B cell (primary cell): ENCODE measurements at regions of chr21 and their contacts with region 1.

Region 1: DNA sequence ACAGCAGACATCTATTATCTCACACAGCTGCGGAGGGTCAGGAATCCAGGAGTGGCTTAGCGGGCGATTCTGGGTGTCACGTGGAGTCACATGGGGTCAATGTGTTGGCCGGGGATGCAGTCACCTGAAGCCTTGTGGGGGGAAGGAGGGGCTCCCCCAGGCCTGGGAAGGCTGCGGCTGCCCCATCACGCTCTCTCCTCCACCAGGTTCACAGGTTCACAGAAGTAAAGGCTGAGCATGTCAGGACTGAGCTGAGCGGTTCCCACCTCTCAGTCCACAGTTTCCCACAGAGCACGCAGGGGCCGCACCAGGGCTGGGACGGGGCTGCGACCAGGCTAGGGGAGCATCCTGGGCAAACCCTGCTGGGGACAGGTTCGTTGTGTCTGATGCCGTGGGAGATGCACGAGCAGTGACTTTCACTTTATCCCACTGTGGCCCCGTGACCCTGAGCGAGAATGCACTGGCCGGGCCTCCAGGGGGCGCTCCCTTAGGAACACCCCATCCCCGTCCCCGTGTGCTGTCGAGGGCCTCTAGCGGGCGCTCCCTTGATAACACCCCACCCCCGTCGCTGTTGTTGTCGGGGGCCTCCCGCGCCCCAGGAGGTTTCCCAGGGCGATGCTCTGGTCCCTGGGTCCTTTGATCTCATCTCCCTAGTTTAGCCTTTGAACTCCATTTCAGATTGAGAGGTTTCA is 73.2 kb upstream of the TRAPPC10 start:
- DNase-seq: peak; percentile 91
- ATAC-seq: peak; percentile 96
- H3K4me3 ChIP-seq: peak overlapping the region in 4 of 5 experiments; percentile 56 to 71 (median 66)
- H3K4me3 Mint-ChIP-seq: peak overlapping the region; percentile 95
- H3K27ac ChIP-seq: peak overlapping the region in 1 of 2 donors; percentile 41
- H3K27ac Mint-ChIP-seq: peak overlapping the region; percentile 82
- H3K4me1 ChIP-seq: peaks cover 9 to 23% of the 10 kb centered on the region in 2 donors
- H3K4me1 Mint-ChIP-seq: peaks cover 20% of the 10 kb centered on the region
- H3K27me3 ChIP-seq: no peaks in the 10 kb centered on the region
- H3K27me3 Mint-ChIP-seq: no peaks in the 10 kb centered on the region
- CTCF ChIP-seq: peak; percentile 99

Region 2: GRCh38 chr21:43810505-43811261 is 128.2 kb before region 1 on chr21:
- CTCF ChIA-PET with region 1: interaction called, 8 read pairs
- POLR2A ChIA-PET with region 1: no interaction called
- intact Hi-C with region 1: loop called (anchors 1 kb)
- DNase-seq: peak; percentile 84
- ATAC-seq: peak; percentile 97
- H3K4me3 ChIP-seq: no peak overlapping the region
- H3K4me3 Mint-ChIP-seq: no peak overlapping the region
- H3K27ac ChIP-seq: no peak overlapping the region
- H3K27ac Mint-ChIP-seq: peak overlapping the region; percentile 56
- H3K4me1 ChIP-seq: peaks cover 21 to 33% of the 10 kb centered on the region in 2 donors
- H3K4me1 Mint-ChIP-seq: peaks cover 28% of the 10 kb centered on the region
- H3K27me3 ChIP-seq: peaks cover 0 to 25% (median 5%) of the 10 kb centered on the region in 4 experiments
- H3K27me3 Mint-ChIP-seq: peaks cover 7% of the 10 kb centered on the region
- CTCF ChIP-seq: peak; percentile 83

Region 3: DNA sequence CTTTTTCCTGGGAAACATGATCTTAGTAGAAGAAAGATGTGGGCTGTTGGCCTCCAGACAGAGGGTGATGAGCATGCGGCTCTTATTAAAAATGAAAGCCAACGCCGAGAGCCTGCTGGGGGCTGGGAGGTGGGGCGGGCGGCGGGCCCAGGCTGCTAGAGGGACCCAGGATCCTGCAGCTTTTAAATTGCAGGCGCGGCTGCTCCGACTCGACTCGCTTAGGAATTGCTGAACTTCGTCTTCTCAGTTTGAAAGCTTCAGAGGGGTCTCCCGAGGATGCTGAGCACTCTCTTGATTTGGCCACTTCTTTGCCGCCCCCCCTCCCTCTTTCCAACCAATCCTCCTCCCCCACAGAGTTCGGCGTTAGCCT is 72.7 kb before region 1 on chr21:
- CTCF ChIA-PET with region 1: interaction called, 4 read pairs
- POLR2A ChIA-PET with region 1: no interaction called
- intact Hi-C with region 1: loop called (anchors 2 kb)
- DNase-seq: peak; percentile 51
- ATAC-seq: peak; percentile 16
- H3K4me3 ChIP-seq: peak overlapping the region; percentile 32 to 78 (median 65)
- H3K4me3 Mint-ChIP-seq: peak overlapping the region; percentile 78
- H3K27ac ChIP-seq: peak overlapping the region; percentile 11 to 64
- H3K27ac Mint-ChIP-seq: peak overlapping the region; percentile 72
- H3K4me1 ChIP-seq: peaks cover 13 to 33% of the 10 kb centered on the region in 2 donors
- H3K4me1 Mint-ChIP-seq: peaks cover 41% of the 10 kb centered on the region
- H3K27me3 ChIP-seq: no peaks in the 10 kb centered on the region
- H3K27me3 Mint-ChIP-seq: no peaks in the 10 kb centered on the region
- CTCF ChIP-seq: no peak

Region 4: DNA sequence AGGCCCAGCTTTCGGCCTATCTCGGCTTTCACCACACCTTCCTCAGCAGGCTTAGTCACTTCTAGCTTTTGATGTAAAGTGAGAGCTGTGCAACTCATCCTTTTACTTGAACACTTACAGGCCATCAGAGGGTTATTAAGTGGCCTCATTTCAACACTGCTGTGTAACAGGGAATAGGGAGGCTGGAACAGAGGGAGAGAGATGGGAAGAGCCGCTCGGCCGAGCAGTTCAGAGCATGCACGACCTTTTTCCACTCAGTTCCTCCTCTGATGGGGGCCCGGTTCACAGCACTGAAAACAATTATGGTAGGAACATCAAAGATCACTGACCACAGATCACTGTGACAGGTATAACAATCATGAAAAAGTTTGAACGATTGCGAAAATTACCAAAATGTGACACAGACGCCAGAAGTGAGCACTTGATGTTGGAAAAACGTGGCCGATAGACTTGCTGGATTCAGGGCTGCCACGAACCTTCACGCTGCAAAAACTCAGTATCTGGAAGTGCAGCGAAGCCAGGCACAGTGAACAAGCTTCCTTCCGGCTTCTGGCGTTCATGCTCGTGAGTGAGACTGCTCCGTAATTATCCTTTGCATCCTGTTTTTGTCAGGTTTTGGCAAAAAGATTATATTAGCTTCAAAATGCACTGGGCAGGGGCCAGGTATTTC is 45.2 kb before region 1 on chr21:
- CTCF ChIA-PET with region 1: interaction called, 16 read pairs
- POLR2A ChIA-PET with region 1: interaction called, 6 read pairs
- intact Hi-C with region 1: no loop called
- DNase-seq: peak; percentile 23
- ATAC-seq: peak; percentile 41
- H3K4me3 ChIP-seq: peak overlapping the region; percentile 5 to 50 (median 23)
- H3K4me3 Mint-ChIP-seq: peak overlapping the region; percentile 78
- H3K27ac ChIP-seq: peak overlapping the region in 1 of 2 donors; percentile 17
- H3K27ac Mint-ChIP-seq: peak overlapping the region; percentile 3
- H3K4me1 ChIP-seq: peaks cover 6 to 16% of the 10 kb centered on the region in 2 donors
- H3K4me1 Mint-ChIP-seq: peaks cover 23% of the 10 kb centered on the region
- H3K27me3 ChIP-seq: no peaks in the 10 kb centered on the region
- H3K27me3 Mint-ChIP-seq: no peaks in the 10 kb centered on the region
- CTCF ChIP-seq: no peak

Region 5: GRCh38 chr21:43916691-43917514 is 22.0 kb before region 1 on chr21:
- CTCF ChIA-PET with region 1: no interaction called
- POLR2A ChIA-PET with region 1: interaction called, 4 read pairs
- intact Hi-C with region 1: loop called (anchors 2 kb)
- DNase-seq: peak; percentile 68
- ATAC-seq: peak; percentile 71
- H3K4me3 ChIP-seq: peak overlapping the region; percentile 24 to 65 (median 60)
- H3K4me3 Mint-ChIP-seq: peak overlapping the region; percentile 79
- H3K27ac ChIP-seq: peak overlapping the region; percentile 59 to 67
- H3K27ac Mint-ChIP-seq: peak overlapping the region; percentile 80
- H3K4me1 ChIP-seq: peaks cover 15 to 35% of the 10 kb centered on the region in 2 donors
- H3K4me1 Mint-ChIP-seq: peaks cover 55% of the 10 kb centered on the region
- H3K27me3 ChIP-seq: no peaks in the 10 kb centered on the region
- H3K27me3 Mint-ChIP-seq: no peaks in the 10 kb centered on the region
- CTCF ChIP-seq: no peak